IMR-90 (cell line): ENCODE measurements at regions of chr19 and their contacts with region 1.

Region 1: GRCh38 chr19:32405431-32406161 is at the start of gene DPY19L3:
- DNase-seq: peak; percentile 91
- ATAC-seq: peak; percentile 95
- H3K4me3 ChIP-seq: peak within 1 kb of the TSS; percentile 82
- H3K27ac ChIP-seq: peak within 1 kb of the TSS; percentile 96
- H3K4me1 ChIP-seq: peaks cover 6% of the 10 kb centered on the region
- H3K27me3 ChIP-seq: no peaks in the 10 kb centered on the region
- CTCF ChIP-seq: no peak
- POLR2A ChIP-seq: peak; percentile 93
- RAD21 ChIP-seq: no peak
- total RNA-seq, gene DPY19L3: 29.6 and 36.4 TPM in 2 replicates

Region 2: DNA sequence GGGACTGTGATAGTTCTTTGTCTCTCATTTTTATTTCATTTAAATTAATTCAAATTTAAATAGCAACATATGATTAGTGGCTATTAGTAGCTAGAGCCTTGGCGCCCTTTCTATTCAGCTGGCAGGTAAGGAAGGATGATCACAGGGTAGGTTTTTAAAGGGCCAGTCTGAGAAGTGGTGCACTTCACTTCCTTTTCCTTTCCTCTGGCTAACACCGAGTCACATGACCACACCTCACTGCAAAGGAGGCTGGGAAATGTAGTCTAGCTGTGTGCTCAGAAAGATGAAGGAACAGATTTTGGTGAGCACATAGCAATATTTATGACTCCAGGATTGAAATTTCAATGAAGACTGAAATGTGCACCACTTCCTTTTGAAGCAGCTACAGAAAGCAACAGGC is 1185.1 kb before region 1 on chr19:
- CTCF ChIA-PET with region 1: no interaction called
- POLR2A ChIA-PET with region 1: no interaction called
- dilution Hi-C with region 1: no loop called
- in situ Hi-C with region 1: no loop called
- intact Hi-C with region 1: loop called (anchors 5 kb)
- DNase-seq: no peak
- ATAC-seq: no peak
- H3K4me3 ChIP-seq: no peak overlapping the region
- H3K27ac ChIP-seq: no peak overlapping the region
- H3K4me1 ChIP-seq: peaks cover 25% of the 10 kb centered on the region
- H3K27me3 ChIP-seq: no peaks in the 10 kb centered on the region
- CTCF ChIP-seq: no peak
- POLR2A ChIP-seq: no peak
- RAD21 ChIP-seq: no peak

Region 3: DNA sequence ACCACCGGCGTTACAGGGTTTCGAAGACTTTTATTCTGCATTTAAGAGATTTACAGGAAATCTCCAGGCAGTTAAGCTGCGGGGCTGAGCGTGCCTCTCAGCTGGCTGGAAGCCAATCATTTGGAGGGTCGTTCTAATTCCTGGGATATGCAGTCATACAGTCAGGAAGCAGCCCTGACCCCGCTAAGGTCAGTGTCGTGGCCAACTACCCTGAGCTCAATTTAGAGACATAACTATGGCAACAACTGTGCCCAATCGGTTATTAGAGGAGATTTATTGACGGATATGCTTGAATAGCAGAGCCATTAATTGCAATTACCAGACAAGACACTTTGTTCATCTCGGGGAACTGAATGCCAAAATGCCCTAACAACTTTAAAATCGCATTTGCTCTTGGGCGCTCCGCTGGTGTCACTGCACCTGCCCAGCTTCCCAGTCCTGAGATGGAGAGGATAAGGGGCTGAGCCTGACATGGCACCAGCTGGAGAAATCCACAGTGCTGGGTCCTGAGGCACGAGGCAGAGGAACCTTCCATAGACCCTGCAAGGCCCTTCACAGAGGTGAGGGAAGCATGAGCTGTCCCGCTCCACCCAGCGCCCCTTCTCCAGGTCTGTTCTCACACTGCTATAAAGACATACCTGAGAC is 75.3 kb before region 1 on chr19:
- CTCF ChIA-PET with region 1: no interaction called
- POLR2A ChIA-PET with region 1: no interaction called
- dilution Hi-C with region 1: no loop called
- in situ Hi-C with region 1: no loop called
- intact Hi-C with region 1: no loop called
- DNase-seq: no peak
- ATAC-seq: no peak
- H3K4me3 ChIP-seq: no peak overlapping the region
- H3K27ac ChIP-seq: no peak overlapping the region
- H3K4me1 ChIP-seq: no peaks in the 10 kb centered on the region
- H3K27me3 ChIP-seq: peaks cover 4% of the 10 kb centered on the region; the same call in 1 of the 2 replicates
- CTCF ChIP-seq: no peak
- POLR2A ChIP-seq: no peak
- RAD21 ChIP-seq: no peak

Region 4: GRCh38 chr19:32373585-32374295 is 31.9 kb before region 1 on chr19:
- CTCF ChIA-PET with region 1: no interaction called
- POLR2A ChIA-PET with region 1: no interaction called
- dilution Hi-C with region 1: no loop called
- in situ Hi-C with region 1: no loop called
- intact Hi-C with region 1: loop called (anchors 1 kb)
- DNase-seq: peak; percentile 100
- ATAC-seq: peak; percentile 94
- H3K4me3 ChIP-seq: peak overlapping the region; percentile 8; the same call in 1 of the 2 replicates
- H3K27ac ChIP-seq: peak overlapping the region; percentile 95
- H3K4me1 ChIP-seq: peaks cover 14% of the 10 kb centered on the region
- H3K27me3 ChIP-seq: no peaks in the 10 kb centered on the region
- CTCF ChIP-seq: no peak
- POLR2A ChIP-seq: no peak
- RAD21 ChIP-seq: no peak

Region 5: DNA sequence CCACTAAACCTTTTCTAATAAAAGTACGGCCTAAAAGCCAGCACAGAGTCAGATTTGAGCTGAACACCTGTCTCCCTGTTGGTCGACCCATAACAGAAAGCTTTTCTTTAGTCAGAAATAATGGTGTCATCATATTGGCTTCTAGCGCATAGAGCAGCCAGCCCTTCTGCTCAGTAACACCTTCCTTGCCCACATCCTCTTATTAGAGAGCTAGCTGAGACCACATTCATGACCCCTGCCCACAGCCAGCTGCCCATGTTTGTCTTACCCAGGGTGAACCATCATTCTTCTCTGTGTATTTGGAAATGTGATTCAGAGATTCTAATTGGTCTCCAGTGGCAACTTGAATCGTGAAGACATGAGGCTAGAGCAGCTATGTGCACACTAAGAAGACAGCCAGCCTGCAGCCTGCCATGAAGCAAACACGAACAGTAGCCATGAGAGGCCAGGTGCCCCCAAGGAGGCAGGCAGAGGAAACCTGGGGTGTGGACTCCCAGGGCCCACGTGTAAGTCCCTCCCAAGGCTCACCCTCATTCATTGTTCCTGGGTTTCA is 93.1 kb after region 1 on chr19:
- CTCF ChIA-PET with region 1: no interaction called
- POLR2A ChIA-PET with region 1: no interaction called
- dilution Hi-C with region 1: no loop called
- in situ Hi-C with region 1: no loop called
- intact Hi-C with region 1: no loop called
- DNase-seq: no peak
- ATAC-seq: no peak
- H3K4me3 ChIP-seq: no peak overlapping the region
- H3K27ac ChIP-seq: no peak overlapping the region
- H3K4me1 ChIP-seq: no peaks in the 10 kb centered on the region
- H3K27me3 ChIP-seq: peaks cover 1% of the 10 kb centered on the region
- CTCF ChIP-seq: no peak
- POLR2A ChIP-seq: no peak
- RAD21 ChIP-seq: no peak